A549 (cell line): ENCODE measurements at regions of chr19 and their contacts with region 1.

Region 1: GRCh38 chr19:48333467-48334384 is 8.4 kb downstream of the EMP3 start:
- DNase-seq: peak; percentile 98 to 99
- ATAC-seq: peak; percentile 90 to 93
- H3K4me3 ChIP-seq: peak overlapping the region; percentile 52
- H3K27ac ChIP-seq: peak overlapping the region; percentile 87 to 89
- H3K4me1 ChIP-seq: peaks cover 12% of the 10 kb centered on the region; the same call in 2 of the 3 replicates
- CTCF ChIP-seq: peak; percentile 96
- EP300 ChIP-seq: no peak
- POLR2A ChIP-seq: peak; percentile 76
- RAD21 ChIP-seq: peak; percentile 92 to 99

Region 2: DNA sequence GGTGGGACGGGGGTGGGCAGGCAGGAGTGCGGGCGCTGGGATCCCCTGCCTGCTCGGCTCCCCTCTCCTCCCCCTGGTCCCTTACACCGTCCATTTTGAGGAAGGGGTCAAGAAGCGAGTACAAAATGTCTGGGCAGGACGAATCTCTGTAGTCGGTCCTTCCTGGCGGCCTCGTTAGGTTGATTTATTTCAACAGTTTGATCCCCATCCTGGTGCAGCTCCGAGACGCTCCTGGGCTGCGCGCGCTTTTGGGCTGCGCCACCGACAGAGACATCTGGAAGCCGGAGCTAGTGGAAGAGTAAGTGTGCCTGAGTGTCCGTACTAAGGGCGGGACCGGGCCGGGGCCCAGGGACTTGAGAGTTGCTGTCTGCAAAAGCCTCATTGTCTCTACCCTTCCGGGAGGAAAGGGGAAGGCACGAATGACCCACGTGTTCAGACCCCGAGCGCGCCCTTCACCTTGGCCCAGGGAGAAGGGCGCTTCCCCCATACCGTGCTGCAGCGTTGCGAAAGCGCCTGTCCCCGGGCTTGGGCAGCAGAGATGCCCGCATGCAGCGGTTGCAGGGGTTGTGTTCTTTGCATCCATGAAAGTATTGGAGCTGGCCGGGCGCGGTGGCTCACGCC is 62.1 kb before region 1 on chr19:
- CTCF ChIA-PET with region 1: interaction called, 91 read pairs
- POLR2A ChIA-PET with region 1: interaction called, 13 read pairs
- DNase-seq: peak; percentile 75 to 90
- ATAC-seq: peak; percentile 85 to 87
- H3K4me3 ChIP-seq: peak overlapping the region; percentile 64
- H3K27ac ChIP-seq: peak overlapping the region; percentile 80 to 89
- H3K4me1 ChIP-seq: 0 out of 3 replicates have a peak, but pooled peaks cover 11% of the 10 kb centered on the region
- CTCF ChIP-seq: no peak
- EP300 ChIP-seq: no peak
- POLR2A ChIP-seq: no peak; the same call in 1 of the 2 replicates
- RAD21 ChIP-seq: no peak

Region 3: DNA sequence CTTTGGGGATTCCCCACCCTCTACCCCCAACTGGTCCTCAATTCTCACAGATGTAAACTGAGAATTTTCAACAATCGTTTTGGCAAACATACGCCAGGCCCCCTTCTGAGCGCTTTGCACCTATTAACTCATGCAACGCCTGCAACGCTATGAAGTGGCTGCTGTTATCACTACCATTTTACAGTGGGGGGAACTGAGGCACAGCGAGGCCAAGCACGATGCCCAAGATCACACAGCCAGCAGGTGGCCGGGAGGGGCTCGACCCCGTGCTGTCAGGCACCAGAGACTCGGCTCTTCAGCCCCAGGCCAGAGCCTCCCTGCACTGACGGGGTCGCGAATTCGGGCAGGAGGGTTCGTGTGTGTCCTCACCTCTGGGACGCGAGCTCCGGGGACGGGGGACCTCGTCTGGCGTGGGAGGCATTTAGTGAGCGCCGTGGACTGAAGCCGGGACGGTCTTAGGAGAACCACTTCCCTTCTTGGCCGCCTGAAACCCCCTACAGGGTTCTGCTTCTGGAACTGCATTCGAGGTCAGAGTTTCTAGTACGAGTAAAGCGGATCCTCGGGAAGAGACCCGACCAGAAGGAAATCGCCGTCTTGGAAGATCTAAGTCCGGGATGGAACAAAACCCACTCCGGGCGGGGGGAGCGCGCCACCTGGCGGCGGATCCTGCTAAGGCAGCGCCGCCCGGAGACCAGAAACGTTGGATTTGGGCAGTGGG is 42.8 kb before region 1 on chr19:
- CTCF ChIA-PET with region 1: interaction called, 18 read pairs
- POLR2A ChIA-PET with region 1: no interaction called
- DNase-seq: peak; percentile 87 to 91
- ATAC-seq: peak; percentile 86 to 91
- H3K4me3 ChIP-seq: peak overlapping the region; percentile 49
- H3K27ac ChIP-seq: peak overlapping the region; percentile 34 to 81; a peak in 5 of 6 replicates
- H3K4me1 ChIP-seq: peaks cover 8% of the 10 kb centered on the region
- CTCF ChIP-seq: peak; percentile 99
- EP300 ChIP-seq: no peak
- POLR2A ChIP-seq: no peak
- RAD21 ChIP-seq: peak; percentile 92 to 93

Region 4: GRCh38 chr19:48308631-48309586 is 24.8 kb before region 1 on chr19:
- CTCF ChIA-PET with region 1: interaction called, 416 read pairs
- POLR2A ChIA-PET with region 1: no interaction called
- DNase-seq: peak in 1 of 2 experiments; percentile 56
- ATAC-seq: peak; percentile 80 to 93
- H3K4me3 ChIP-seq: no peak overlapping the region
- H3K27ac ChIP-seq: no peak overlapping the region
- H3K4me1 ChIP-seq: peaks cover 5% of the 10 kb centered on the region; the same call in 1 of the 3 replicates
- CTCF ChIP-seq: peak; percentile 42
- EP300 ChIP-seq: no peak
- POLR2A ChIP-seq: no peak
- RAD21 ChIP-seq: peak in 1 of 2 experiments; percentile 17; a peak in 2 of 5 replicates

Region 5: GRCh38 chr19:48351341-48351752 is 17.6 kb after region 1 on chr19:
- CTCF ChIA-PET with region 1: interaction called, 224 read pairs
- POLR2A ChIA-PET with region 1: interaction called, 4 read pairs
- DNase-seq: peak; percentile 82 to 89
- ATAC-seq: peak; percentile 76 to 83
- H3K4me3 ChIP-seq: no peak overlapping the region
- H3K27ac ChIP-seq: peak overlapping the region in 1 of 2 experiments; percentile 74; a peak in 3 of 6 replicates
- H3K4me1 ChIP-seq: peaks cover 29% of the 10 kb centered on the region
- CTCF ChIP-seq: peak; percentile 90
- EP300 ChIP-seq: no peak
- POLR2A ChIP-seq: no peak
- RAD21 ChIP-seq: peak; percentile 73

Region 6: GRCh38 chr19:48372904-48373303 is 39.2 kb after region 1 on chr19:
- CTCF ChIA-PET with region 1: interaction called, 19 read pairs
- POLR2A ChIA-PET with region 1: no interaction called
- DNase-seq: peak in 1 of 2 experiments; percentile 68
- ATAC-seq: peak; percentile 17 to 51; a peak in 3 of 6 replicates
- H3K4me3 ChIP-seq: no peak overlapping the region
- H3K27ac ChIP-seq: peak overlapping the region; percentile 64 to 81
- H3K4me1 ChIP-seq: peaks cover 23% of the 10 kb centered on the region
- CTCF ChIP-seq: no peak
- EP300 ChIP-seq: no peak
- POLR2A ChIP-seq: no peak
- RAD21 ChIP-seq: no peak

Region 7: GRCh38 chr19:48492925-48493717 is 159.4 kb after region 1 on chr19:
- CTCF ChIA-PET with region 1: interaction called, 10 read pairs
- POLR2A ChIA-PET with region 1: interaction called, 3 read pairs
- DNase-seq: peak; percentile 95 to 100
- ATAC-seq: peak; percentile 67 to 85
- H3K4me3 ChIP-seq: peak overlapping the region; percentile 65
- H3K27ac ChIP-seq: peak overlapping the region; percentile 86 to 94
- H3K4me1 ChIP-seq: peaks cover 50% of the 10 kb centered on the region
- CTCF ChIP-seq: no peak
- EP300 ChIP-seq: no peak
- POLR2A ChIP-seq: peak; percentile 89
- RAD21 ChIP-seq: no peak